GM12878 (cell line): ENCODE measurements at regions of chr1 and their contacts with region 1.

Region 1: DNA sequence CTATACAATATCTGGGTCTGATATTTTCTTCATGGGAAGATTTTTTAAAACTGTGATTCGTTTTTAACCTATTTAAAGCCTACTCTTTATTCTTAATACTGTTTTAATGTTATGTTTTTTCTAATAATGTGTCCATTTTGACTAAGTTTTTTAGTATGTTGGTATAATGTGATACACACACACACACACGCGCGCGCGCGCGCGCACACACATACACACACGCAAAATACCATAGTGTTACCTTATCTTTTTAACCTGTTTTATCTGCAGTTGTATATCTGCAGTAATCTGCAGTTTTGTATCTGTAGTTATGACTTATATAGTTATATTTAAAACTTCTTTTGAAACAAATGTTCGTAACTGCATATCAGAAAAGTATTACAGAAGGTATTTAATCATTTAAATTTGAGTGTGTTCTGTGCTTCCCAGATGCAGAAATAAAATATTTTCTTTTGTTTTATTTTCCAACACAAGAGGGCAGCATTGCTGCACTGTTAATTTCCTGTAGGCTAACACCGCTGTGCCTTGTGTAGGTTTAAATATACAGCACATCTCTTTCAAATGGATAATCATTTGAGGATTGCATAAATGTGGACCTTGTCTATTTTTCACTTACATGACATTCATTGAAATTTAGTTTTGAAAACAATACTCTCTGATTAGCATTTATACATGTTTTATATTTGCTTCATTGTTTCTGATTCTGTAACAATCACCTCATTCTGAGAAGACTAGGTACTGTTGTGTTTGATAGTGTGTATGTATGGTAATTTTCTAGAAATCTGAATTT is 166.1 kb downstream of the PDE4B start:
- DNase-seq: peak; percentile 7
- ATAC-seq: peak; percentile 78
- H3K4me3 ChIP-seq: no peak overlapping the region
- H3K27ac ChIP-seq: no peak overlapping the region
- H3K4me1 ChIP-seq: no peaks in the 10 kb centered on the region
- H3K27me3 ChIP-seq: peaks cover 0 to 2% of the 10 kb centered on the region in 2 experiments; a peak in 1 of 4 replicates
- CTCF ChIP-seq: peak; percentile 42 to 73 (median 46); a peak in 5 of 6 replicates
- EP300 ChIP-seq: no peak
- POLR2A ChIP-seq: no peak
- RAD21 ChIP-seq: peak; percentile 95

Region 2: GRCh38 chr1:65717815-65718454 is 240.8 kb before region 1 on chr1:
- CTCF ChIA-PET with region 1: no interaction called
- POLR2A ChIA-PET with region 1: no interaction called
- RAD21 ChIA-PET with region 1: no interaction called
- SMC1A ChIA-PET with region 1: interaction called, 3 read pairs
- in situ Hi-C with region 1: no loop called
- intact Hi-C with region 1: loop called (anchors 5 kb)
- DNase-seq: no peak
- ATAC-seq: 0 out of 3 replicates have a peak, but pooled peaks have one; percentile 23
- H3K4me3 ChIP-seq: no peak overlapping the region
- H3K27ac ChIP-seq: no peak overlapping the region
- H3K4me1 ChIP-seq: no peaks in the 10 kb centered on the region
- H3K27me3 ChIP-seq: no peaks in the 10 kb centered on the region
- CTCF ChIP-seq: peak in 1 of 3 experiments; percentile 20; a peak in 1 of 6 replicates
- EP300 ChIP-seq: no peak
- POLR2A ChIP-seq: no peak
- RAD21 ChIP-seq: peak; percentile 49

Region 3: DNA sequence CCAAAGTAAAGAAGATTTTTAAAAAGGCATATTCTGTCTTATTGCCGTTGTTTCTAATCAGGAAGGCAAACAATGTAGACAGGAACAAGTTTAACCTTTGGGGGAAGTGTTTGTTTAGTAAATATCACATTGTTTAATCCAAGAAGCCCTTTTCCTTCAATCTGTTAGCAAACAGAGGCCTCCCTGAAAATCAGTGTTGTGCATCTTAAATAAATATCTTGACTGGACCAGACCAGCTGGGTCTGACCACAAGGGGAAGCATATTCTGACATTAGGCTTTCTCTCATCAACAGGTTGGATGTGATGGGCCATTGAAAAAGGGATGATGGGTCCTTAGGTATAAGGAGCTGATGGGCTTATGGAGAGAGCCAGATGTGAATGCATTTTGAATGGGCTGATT is 493.4 kb after region 1 on chr1:
- CTCF ChIA-PET with region 1: interaction called, 60 read pairs
- POLR2A ChIA-PET with region 1: no interaction called
- RAD21 ChIA-PET with region 1: interaction called, 63 read pairs
- SMC1A ChIA-PET with region 1: interaction called, 52 read pairs
- in situ Hi-C with region 1: loop called (anchors 5 kb)
- intact Hi-C with region 1: no loop called
- DNase-seq: no peak
- ATAC-seq: peak; percentile 25; the same call in 1 of the 3 replicates
- H3K4me3 ChIP-seq: no peak overlapping the region
- H3K27ac ChIP-seq: no peak overlapping the region
- H3K4me1 ChIP-seq: no peaks in the 10 kb centered on the region
- H3K27me3 ChIP-seq: no peaks in the 10 kb centered on the region
- CTCF ChIP-seq: no peak
- EP300 ChIP-seq: no peak
- POLR2A ChIP-seq: no peak
- RAD21 ChIP-seq: no peak

Region 4: DNA sequence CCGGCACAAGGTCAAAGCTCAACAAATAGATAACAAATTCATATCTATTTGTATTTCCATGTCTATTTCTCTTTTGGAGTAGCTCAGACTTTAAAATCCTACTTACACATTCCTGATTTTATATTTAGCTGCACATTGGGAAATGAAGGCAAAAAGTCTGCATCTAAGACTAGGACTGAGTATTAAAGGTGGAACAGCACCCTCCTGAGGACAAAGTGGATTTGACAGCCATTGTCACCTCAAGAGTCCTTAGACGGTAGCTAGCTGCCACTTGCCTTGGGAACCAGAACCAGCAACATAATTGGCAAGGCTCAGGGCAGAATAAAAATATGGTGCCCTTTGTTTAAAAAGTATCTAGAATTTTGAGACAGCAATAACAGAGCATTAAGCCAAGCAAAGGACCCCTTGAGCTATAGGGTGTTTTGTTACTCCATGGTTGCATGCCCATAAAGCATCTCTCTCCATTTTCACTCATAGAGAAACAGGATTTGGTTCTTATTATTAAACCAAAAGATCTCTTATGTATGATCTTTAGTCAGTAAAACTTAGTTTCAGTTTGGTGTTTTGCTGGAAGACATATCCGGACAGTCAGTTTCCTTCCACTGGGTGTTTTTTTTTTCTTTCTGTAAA is 545.2 kb after region 1 on chr1:
- CTCF ChIA-PET with region 1: interaction called, 7 read pairs
- POLR2A ChIA-PET with region 1: no interaction called
- RAD21 ChIA-PET with region 1: interaction called, 7 read pairs
- SMC1A ChIA-PET with region 1: interaction called, 7 read pairs
- in situ Hi-C with region 1: no loop called
- intact Hi-C with region 1: loop called (anchors 5 kb)
- DNase-seq: no peak
- ATAC-seq: peak; percentile 89
- H3K4me3 ChIP-seq: no peak overlapping the region
- H3K27ac ChIP-seq: no peak overlapping the region
- H3K4me1 ChIP-seq: no peaks in the 10 kb centered on the region
- H3K27me3 ChIP-seq: 0 out of 4 replicates have a peak, but pooled peaks cover 0 to 1% of the 10 kb centered on the region in 2 experiments
- CTCF ChIP-seq: peak; percentile 57 to 69 (median 63)
- EP300 ChIP-seq: no peak
- POLR2A ChIP-seq: no peak
- RAD21 ChIP-seq: peak; percentile 56

Region 5: GRCh38 chr1:66725885-66726665 is 767.3 kb after region 1 on chr1:
- CTCF ChIA-PET with region 1: interaction called, 3 read pairs
- POLR2A ChIA-PET with region 1: no interaction called
- RAD21 ChIA-PET with region 1: interaction called, 4 read pairs
- SMC1A ChIA-PET with region 1: no interaction called
- in situ Hi-C with region 1: no loop called
- intact Hi-C with region 1: loop called (anchors 1 kb)
- DNase-seq: peak; percentile 26
- ATAC-seq: peak; percentile 93
- H3K4me3 ChIP-seq: no peak overlapping the region
- H3K27ac ChIP-seq: no peak overlapping the region
- H3K4me1 ChIP-seq: no peaks in the 10 kb centered on the region
- H3K27me3 ChIP-seq: peaks cover 0 to 8% of the 10 kb centered on the region in 2 experiments; a peak in 1 of 4 replicates
- CTCF ChIP-seq: peak; percentile 89 to 93 (median 90)
- EP300 ChIP-seq: no peak
- POLR2A ChIP-seq: no peak
- RAD21 ChIP-seq: peak; percentile 89